T-cell (primary cell): ENCODE measurements at regions of chr17 and their contacts with region 1.

Region 1: GRCh38 chr17:21511363-21512198 is 135.4 kb downstream of the KCNJ12 start:
- DNase-seq: peak in 34 of 35 experiments; percentile 29 to 76 (median 50)
- ATAC-seq: peak; percentile 70 to 86 (median 82)
- H3K4me3 ChIP-seq: peak overlapping the region; percentile 30 to 62
- H3K4me3 Mint-ChIP-seq: peak overlapping the region; percentile 58 to 77 (median 69)
- H3K27ac ChIP-seq: no peak overlapping the region
- H3K27ac Mint-ChIP-seq: no peak overlapping the region
- H3K4me1 ChIP-seq: peaks cover 0 to 16% of the 10 kb centered on the region in 2 experiments
- H3K4me1 Mint-ChIP-seq: peaks cover 12 to 18% (median 15%) of the 10 kb centered on the region in 3 donors
- H3K27me3 ChIP-seq: peaks cover 6 to 31% of the 10 kb centered on the region in 2 experiments
- H3K27me3 Mint-ChIP-seq: peaks cover 19 to 30% of the 10 kb centered on the region in 2 donors

Region 2: GRCh38 chr17:21119247-21119918 is 392.2 kb before region 1 on chr17:
- CTCF ChIA-PET with region 1: interaction called, 6 to 11 read pairs
- POLR2A ChIA-PET with region 1: no interaction called
- DNase-seq: peak; percentile 41 to 88 (median 61)
- ATAC-seq: peak; percentile 81 to 93 (median 87)
- H3K4me3 ChIP-seq: no peak overlapping the region
- H3K4me3 Mint-ChIP-seq: no peak overlapping the region
- H3K27ac ChIP-seq: no peak overlapping the region
- H3K27ac Mint-ChIP-seq: no peak overlapping the region
- H3K4me1 ChIP-seq: peaks cover 0 to 6% of the 10 kb centered on the region in 2 experiments
- H3K4me1 Mint-ChIP-seq: peaks cover 6 to 12% (median 8%) of the 10 kb centered on the region in 3 donors
- H3K27me3 ChIP-seq: peaks cover 0 to 7% of the 10 kb centered on the region in 2 experiments
- H3K27me3 Mint-ChIP-seq: peaks cover 0 to 1% of the 10 kb centered on the region in 2 donors

Region 3: DNA sequence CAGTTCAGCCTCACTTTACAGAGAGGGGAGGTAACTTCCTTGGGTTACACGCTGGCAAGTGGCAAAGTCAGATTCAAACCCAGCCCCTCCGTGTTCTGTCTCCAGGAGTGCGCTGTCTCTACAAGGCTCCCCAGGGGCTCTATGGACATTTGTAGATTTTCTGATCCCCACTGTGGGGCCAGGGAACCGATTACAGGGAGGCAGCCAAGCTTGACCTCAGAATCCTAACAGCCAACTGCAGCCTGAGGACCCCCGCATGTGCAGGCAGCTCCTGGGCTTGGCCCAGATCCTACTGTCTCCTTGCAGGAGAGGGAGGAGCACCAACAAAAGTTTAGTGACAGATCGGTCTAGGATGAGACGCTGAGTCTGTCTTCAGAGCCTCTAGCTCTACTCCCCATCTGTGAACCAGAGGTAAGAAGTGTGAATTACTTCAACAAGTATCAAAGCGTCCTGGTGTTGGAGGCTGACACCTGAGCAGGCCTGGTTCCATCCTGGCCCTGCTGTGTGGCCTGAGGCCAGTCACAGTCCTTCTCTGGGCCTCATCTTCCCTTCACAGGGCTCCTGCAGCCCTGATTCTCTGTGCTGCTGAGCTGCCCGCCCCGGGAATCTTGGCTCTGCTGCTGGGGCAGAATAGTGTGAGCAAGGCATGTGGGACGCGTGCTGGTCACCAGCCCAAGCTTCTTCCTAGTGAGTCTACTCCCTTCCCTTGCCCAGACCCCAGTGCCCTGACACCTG is 249.2 kb before region 1 on chr17:
- CTCF ChIA-PET with region 1: no interaction called
- POLR2A ChIA-PET with region 1: interaction called in 1 of 2 experiments, 12 read pairs
- DNase-seq: no peak
- ATAC-seq: no peak
- H3K4me3 ChIP-seq: no peak overlapping the region
- H3K4me3 Mint-ChIP-seq: no peak overlapping the region
- H3K27ac ChIP-seq: no peak overlapping the region
- H3K27ac Mint-ChIP-seq: no peak overlapping the region
- H3K4me1 ChIP-seq: peaks cover 0 to 10% of the 10 kb centered on the region in 2 experiments
- H3K4me1 Mint-ChIP-seq: peaks cover 11 to 17% (median 13%) of the 10 kb centered on the region in 3 donors
- H3K27me3 ChIP-seq: no peaks in the 10 kb centered on the region
- H3K27me3 Mint-ChIP-seq: no peaks in the 10 kb centered on the region

Region 4: DNA sequence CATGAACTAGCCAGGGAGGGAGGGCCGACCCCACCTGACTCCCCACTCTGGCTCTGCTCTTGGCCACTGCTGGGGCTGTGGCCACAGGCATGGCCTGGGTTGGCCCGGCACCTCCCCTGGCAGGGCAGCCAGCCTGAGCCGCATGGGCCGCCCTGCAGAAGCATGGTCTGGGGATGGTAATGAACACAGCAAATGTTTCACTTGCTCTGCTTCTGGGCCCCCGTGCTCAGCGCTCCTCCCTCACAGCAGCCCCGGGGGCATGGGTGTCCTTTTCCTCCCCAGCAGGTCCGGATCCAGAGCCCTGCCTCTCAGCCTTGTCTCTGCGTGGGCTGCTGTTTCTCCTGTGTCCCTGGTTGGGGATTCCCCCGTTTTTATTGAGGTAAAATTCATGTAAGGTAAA is 166.3 kb before region 1 on chr17:
- CTCF ChIA-PET with region 1: no interaction called
- POLR2A ChIA-PET with region 1: no interaction called
- DNase-seq: no peak
- ATAC-seq: no peak
- H3K4me3 ChIP-seq: no peak overlapping the region
- H3K4me3 Mint-ChIP-seq: no peak overlapping the region
- H3K27ac ChIP-seq: no peak overlapping the region
- H3K27ac Mint-ChIP-seq: no peak overlapping the region
- H3K4me1 ChIP-seq: no peaks in the 10 kb centered on the region
- H3K4me1 Mint-ChIP-seq: peaks cover 0 to 7% (median 0%) of the 10 kb centered on the region in 3 donors
- H3K27me3 ChIP-seq: no peaks in the 10 kb centered on the region
- H3K27me3 Mint-ChIP-seq: peaks cover 0 to 2% of the 10 kb centered on the region in 2 donors

Region 5: DNA sequence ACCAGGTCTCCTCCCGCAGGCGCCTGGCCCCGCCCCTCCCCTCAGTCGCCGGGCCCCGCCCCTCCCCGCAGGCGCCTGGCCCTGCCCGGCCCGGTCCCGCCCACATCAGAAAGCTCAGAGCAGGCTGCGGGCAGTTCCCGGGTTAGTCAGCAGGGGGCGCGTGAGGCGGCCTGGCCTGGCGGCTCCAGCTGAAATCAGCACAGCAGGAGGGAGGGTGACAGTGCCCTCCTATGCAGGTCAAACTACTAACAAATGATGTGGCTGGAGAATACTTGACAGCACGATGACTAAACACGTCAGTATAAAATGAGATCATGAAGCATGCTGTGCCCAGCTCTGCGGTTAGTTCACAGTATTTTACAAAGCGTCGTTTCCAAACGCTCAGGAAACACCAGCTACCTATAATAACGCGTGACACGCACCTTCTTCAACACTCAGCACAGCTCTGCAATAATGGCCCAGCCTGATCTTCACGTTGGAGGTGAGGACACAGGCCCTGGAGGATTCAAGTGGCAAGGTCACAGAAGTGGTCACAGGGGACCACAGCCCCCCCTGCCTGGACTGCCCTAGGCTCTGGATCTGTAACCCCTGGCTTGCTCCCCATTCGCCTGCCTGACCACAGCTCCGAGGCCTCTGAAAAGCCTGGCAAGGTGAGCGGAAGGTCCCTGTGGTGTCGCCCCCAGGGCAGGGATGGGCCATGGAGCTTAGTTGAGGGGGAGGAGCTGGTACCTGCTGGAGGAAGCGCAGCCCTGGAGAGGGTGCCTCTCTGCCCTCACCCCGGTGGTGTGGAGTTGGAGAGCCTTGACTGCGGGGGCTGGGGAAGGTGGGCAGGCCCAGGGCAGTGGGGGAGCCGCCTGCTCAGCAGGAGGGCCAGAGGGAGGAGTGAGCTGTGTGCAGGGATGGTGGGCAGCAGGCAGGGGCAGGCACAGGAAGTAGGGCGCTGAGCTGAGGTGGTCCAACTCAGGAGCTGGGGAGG is 54.2 kb before region 1 on chr17:
- CTCF ChIA-PET with region 1: interaction called, 23 to 67 read pairs
- POLR2A ChIA-PET with region 1: interaction called, 4 read pairs
- DNase-seq: peak; percentile 77 to 94 (median 87)
- ATAC-seq: peak; percentile 85 to 91 (median 87)
- H3K4me3 ChIP-seq: no peak overlapping the region
- H3K4me3 Mint-ChIP-seq: no peak overlapping the region
- H3K27ac ChIP-seq: no peak overlapping the region
- H3K27ac Mint-ChIP-seq: peak overlapping the region; percentile 8 to 83
- H3K4me1 ChIP-seq: peaks cover 3 to 17% of the 10 kb centered on the region in 2 experiments
- H3K4me1 Mint-ChIP-seq: peaks cover 14 to 20% (median 20%) of the 10 kb centered on the region in 3 donors
- H3K27me3 ChIP-seq: peaks cover 0 to 42% of the 10 kb centered on the region in 2 experiments
- H3K27me3 Mint-ChIP-seq: peaks cover 5 to 8% of the 10 kb centered on the region in 2 donors